Left cardiac atrium (tissue), 4 donors: ENCODE measurements at regions of chr21 and their contacts with region 1.

Region 1: GRCh38 chr21:32257962-32258785 is 20.7 kb downstream of the MIS18A start:
- DNase-seq: peak; percentile 71
- ATAC-seq: peak; percentile 82 to 83

Region 2: DNA sequence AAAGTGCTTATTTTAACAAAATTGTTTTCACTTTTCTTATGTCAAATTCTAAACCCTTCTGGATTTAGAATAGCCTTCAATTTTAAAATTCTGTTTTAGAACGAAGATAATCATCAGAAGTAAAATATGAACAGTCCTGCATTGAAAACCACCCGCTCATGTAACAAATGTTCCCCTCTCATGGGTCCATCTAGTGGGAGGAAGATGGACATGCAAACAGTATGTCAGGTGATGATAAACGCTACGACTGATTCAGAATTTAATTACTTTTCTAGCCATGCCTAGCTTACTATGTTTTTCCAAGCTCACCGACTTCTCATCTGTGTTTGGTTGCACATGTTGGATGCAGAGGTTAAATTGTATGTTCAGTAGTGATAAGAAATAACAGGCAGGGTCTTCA is 575.1 kb before region 1 on chr21:
- intact Hi-C with region 1: no loop called
- DNase-seq: no peak
- ATAC-seq: no peak

Region 3: GRCh38 chr21:31781737-31782136 is 476.4 kb before region 1 on chr21:
- intact Hi-C with region 1: loop called (anchors 5 kb)
- DNase-seq: peak; percentile 37
- ATAC-seq: peak; percentile 41 to 69

Region 4: DNA sequence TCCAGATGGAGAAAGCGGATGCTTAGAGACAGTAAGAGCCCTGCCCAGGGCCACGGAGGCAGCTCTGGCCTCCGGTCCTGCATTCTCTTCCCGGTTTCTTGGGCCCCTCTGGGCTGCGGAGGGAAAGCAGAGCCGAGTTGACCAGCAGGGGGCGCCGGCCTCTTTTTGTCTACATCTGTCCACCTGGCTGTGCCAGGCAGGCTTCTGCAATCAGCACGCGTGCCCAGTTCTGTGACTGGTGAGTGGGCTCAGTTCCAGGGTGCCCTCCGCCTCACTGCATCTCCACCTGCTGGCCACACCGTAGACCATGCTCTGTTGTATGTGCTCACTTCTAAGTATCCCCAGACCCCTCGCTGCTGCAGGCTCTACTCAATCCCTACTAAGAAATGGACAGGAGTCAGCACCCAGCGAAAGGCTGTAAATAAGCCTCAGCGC is 392.1 kb before region 1 on chr21:
- intact Hi-C with region 1: loop called (anchors 1 to 5 kb)
- DNase-seq: peak; percentile 89
- ATAC-seq: peak; percentile 97 to 98

Region 5: GRCh38 chr21:31991356-31992331 is 266.5 kb before region 1 on chr21:
- intact Hi-C with region 1: loop called in 1 of 2 experiments (anchors 5 kb)
- DNase-seq: no peak
- ATAC-seq: no peak

Region 6: DNA sequence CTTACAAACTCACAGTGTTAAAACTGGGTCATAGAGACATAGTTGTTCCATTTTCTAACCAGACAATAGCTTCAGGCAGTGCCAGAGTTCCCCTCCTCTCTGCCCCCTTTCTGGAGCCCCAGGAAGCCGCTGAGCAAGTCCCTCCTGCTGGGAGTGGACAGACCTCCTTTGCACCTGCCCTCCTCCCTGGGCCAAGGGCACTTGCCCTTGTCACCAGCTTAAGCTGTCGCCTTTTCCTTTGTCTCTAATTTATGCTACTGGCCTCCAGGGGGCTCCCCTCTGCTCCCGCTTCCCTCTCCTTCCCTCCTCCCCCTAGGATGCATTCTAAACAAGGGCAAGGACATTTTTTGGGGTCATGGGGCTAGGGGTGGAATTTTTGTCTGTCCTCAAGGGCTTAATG is 161.8 kb before region 1 on chr21:
- intact Hi-C with region 1: loop called in 1 of 2 experiments (anchors 5 kb)
- DNase-seq: peak; percentile 34
- ATAC-seq: peak; percentile 51 to 64

Region 7: GRCh38 chr21:32298148-32298559 is 40.0 kb after region 1 on chr21:
- intact Hi-C with region 1: no loop called
- DNase-seq: no peak
- ATAC-seq: peak in 1 of 2 donors; percentile 81